Endothelial cell of umbilical vein (primary cell): ENCODE measurements at regions of chr10 and their contacts with region 1.

Region 1: GRCh38 chr10:97731346-97732051 is 5.4 kb upstream of the ZFYVE27 start:
- DNase-seq: peak; percentile 79
- H3K4me3 ChIP-seq: no peak overlapping the region
- H3K27ac ChIP-seq: no peak overlapping the region
- H3K4me1 ChIP-seq: peaks cover 6% of the 10 kb centered on the region
- H3K27me3 ChIP-seq: no peaks in the 10 kb centered on the region
- CTCF ChIP-seq: peak; percentile 82
- POLR2A ChIP-seq: no peak

Region 2: GRCh38 chr10:97701438-97702069 is 29.9 kb before region 1 on chr10:
- CTCF ChIA-PET with region 1: interaction called, 863 read pairs
- POLR2A ChIA-PET with region 1: no interaction called
- dilution Hi-C with region 1: no loop called
- intact Hi-C with region 1: loop called (anchors 1 kb)
- DNase-seq: peak; percentile 70
- H3K4me3 ChIP-seq: no peak overlapping the region
- H3K27ac ChIP-seq: no peak overlapping the region
- H3K4me1 ChIP-seq: no peaks in the 10 kb centered on the region
- H3K27me3 ChIP-seq: peaks cover 2 to 6% of the 10 kb centered on the region in 2 experiments
- CTCF ChIP-seq: peak; percentile 79 to 85
- POLR2A ChIP-seq: no peak